HEK293 (cell line): ENCODE measurements at regions of chr12 and their contacts with region 1.

Region 1: DNA sequence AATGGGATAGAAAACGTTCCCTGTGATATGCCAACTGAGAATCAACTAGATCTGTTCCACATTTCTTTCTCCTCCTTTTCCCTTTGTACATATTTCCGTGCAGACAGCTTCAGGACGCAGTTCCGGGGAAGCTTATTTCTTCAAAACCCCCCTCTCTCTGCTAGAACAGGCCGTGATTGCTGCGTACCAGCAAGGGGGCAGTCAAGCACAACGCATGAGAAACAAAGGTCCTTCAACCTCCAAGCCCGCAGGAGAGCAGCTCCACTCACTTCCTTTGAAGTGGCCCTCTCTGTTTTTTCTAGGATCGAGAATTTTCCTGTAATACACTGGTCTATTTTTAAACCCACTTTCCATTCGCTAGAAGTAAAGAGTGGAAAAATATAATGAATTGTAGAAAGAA is 80.8 kb downstream of the ZNF664 start:
- H3K4me3 ChIP-seq: no peak overlapping the region
- H3K27ac ChIP-seq: no peak overlapping the region
- H3K4me1 ChIP-seq: no peaks in the 10 kb centered on the region
- CTCF ChIP-seq: no peak

Region 2: GRCh38 chr12:123839826-123840225 is 214.0 kb before region 1 on chr12:
- CTCF ChIA-PET with region 1: no interaction called
- POLR2A ChIA-PET with region 1: no interaction called
- H3K4me3 ChIP-seq: no peak overlapping the region
- H3K27ac ChIP-seq: no peak overlapping the region
- H3K4me1 ChIP-seq: no peaks in the 10 kb centered on the region
- CTCF ChIP-seq: no peak

Region 3: DNA sequence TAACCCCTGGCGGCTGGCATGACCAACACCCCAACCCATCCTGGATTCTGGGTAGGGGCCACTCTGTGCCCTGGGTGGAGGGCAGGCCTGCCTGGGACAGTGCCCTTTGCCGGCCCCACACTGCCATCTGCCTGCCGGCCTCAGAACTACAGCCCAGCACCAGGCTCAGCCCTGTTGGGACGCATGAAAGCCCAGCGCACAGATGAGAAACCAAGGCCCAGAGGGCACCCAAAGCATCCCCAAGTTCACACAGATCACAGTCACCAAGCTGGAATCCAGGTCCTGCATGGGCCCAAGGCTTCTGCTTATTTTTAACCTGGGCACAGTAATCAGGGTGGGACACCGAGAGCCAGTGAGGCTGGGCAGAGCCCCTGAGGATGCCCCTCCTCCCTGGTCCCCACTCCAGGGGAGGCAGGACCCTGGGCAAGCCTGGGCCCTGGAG is 267.2 kb after region 1 on chr12:
- CTCF ChIA-PET with region 1: interaction called, 10 read pairs
- POLR2A ChIA-PET with region 1: no interaction called
- H3K4me3 ChIP-seq: no peak overlapping the region
- H3K27ac ChIP-seq: no peak overlapping the region
- H3K4me1 ChIP-seq: no peaks in the 10 kb centered on the region
- CTCF ChIP-seq: peak; percentile 87

Region 4: GRCh38 chr12:124551268-124552144 is 497.7 kb after region 1 on chr12:
- CTCF ChIA-PET with region 1: no interaction called
- POLR2A ChIA-PET with region 1: no interaction called
- H3K4me3 ChIP-seq: no peak overlapping the region
- H3K27ac ChIP-seq: peak overlapping the region; percentile 72
- H3K4me1 ChIP-seq: peaks cover 23% of the 10 kb centered on the region
- CTCF ChIP-seq: no peak